Breast epithelium (tissue), 4 donors: ENCODE measurements at regions of chr11 and their contacts with region 1.

Region 1: DNA sequence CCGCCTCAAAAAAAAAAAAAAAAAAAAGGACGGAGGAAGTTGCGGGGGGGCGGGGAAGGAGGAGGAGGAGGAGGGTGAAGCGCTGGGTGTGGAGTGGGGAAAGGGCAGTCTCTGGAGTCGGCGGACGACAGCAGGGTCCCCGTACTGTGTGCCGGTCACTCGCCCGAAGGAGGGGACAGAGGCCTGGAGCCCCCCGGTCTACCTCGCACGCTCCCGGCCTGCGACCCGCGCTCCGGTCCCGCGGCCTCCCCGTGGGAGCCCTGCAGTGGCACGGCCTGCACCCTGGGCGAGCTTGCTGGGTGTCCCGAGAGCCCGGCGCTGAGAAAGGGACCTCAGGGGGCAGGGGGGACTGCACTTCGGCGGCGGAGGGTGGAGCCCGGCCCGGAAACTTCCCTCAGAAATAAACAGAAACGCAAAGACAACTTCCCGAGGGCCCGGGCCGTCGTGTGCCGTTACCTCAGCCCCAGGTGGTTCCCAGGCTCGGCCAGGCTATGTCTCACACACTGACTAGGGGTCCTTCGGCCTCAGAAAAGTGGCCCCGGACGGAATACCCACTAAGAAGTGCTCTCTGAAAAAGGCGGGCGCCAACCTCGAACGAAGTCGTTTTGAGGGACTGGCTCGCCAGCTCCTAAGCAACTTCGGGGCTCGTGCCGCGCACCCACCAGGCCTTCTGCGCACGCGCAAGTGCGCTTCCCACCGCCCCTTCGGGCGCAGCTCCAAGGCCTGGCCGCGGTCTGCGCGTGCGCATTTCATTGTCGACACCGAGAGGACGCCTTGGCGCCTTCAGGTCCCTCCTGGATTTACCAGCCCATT is at the start of gene MAJIN:
- DNase-seq: peak; percentile 47 to 69
- H3K4me3 ChIP-seq: peak within 1 kb of the TSS; percentile 17 to 58 (median 45)
- H3K27ac ChIP-seq: no peak within 1 kb of the TSS
- H3K4me1 ChIP-seq: no peaks in the 10 kb centered on the region
- H3K27me3 ChIP-seq: no peaks in the 10 kb centered on the region
- CTCF ChIP-seq: no peak
- POLR2A ChIP-seq: no peak
- total RNA-seq, gene MAJIN: not detected

Region 2: GRCh38 chr11:64419818-64420485 is 551.7 kb before region 1 on chr11:
- intact Hi-C with region 1: no loop called
- DNase-seq: no peak
- H3K4me3 ChIP-seq: no peak overlapping the region
- H3K27ac ChIP-seq: no peak overlapping the region
- H3K4me1 ChIP-seq: no peaks in the 10 kb centered on the region
- H3K27me3 ChIP-seq: no peaks in the 10 kb centered on the region
- CTCF ChIP-seq: no peak
- POLR2A ChIP-seq: no peak

Region 3: DNA sequence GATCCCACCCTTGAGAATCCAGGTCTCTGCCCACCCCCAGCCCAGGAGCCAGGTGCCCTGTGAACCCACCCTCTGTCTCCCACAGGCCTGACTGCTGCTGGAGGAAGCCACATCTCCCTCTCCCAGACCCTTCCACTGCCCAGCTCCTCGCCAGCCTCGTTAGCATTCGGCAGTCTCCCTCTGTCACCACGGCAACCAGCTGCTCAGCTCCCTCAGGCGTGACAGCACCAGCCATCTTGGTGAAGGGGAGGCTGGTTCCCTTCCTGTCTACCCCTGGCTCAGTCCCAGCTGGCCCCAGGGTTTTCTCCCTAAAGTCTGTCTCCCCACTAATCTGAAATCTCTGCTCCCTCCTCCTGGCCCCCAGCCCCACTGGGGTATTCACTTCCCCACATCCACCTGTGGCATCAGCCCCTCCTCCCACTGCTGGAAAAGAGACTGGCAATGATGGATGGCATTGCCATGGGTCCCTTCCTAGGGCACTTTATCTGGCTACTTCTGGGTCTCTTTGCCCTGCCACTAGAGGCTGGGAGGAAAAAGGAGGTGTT is 276.7 kb before region 1 on chr11:
- intact Hi-C with region 1: no loop called
- DNase-seq: no peak
- H3K4me3 ChIP-seq: no peak overlapping the region
- H3K27ac ChIP-seq: no peak overlapping the region
- H3K4me1 ChIP-seq: no peaks in the 10 kb centered on the region
- H3K27me3 ChIP-seq: peaks cover 0 to 12% of the 10 kb centered on the region in 2 donors
- CTCF ChIP-seq: no peak
- POLR2A ChIP-seq: no peak

Region 4: DNA sequence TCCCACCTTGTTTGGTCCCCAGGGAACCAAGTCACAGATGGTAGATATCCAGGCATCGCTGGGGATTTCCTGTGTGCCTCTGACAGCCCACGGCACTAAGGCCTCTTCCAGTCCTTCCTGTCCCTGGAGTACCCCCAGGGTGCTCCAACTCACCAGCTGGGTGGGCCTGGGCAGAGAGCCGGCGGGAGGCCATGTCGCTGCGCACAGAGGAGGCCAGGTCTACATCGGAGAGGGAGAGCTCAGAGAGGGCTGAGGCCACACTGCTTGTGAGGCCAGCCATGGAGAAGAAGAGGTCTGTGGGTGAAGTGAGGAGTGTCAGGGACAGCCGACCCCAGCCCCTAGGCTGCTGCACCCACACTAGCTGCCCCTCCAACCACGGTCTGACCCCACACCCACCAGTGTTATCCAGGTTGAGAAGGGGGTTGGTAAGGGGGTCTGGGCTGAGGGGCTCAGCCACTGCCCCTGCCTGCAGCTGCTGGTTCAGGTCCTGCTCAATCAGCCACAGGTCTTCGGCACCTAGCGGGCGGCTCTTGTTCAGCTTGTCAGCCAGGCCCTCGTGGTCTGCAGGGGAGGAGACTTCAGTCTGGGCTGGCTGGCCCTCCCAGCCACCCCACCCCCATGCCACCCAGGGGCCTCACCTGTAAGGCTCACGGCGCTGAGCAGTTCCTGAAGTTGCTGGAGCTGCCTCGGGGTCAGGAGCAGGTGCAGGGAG is 59.8 kb before region 1 on chr11:
- intact Hi-C with region 1: loop called (anchors 2 kb)
- DNase-seq: no peak
- H3K4me3 ChIP-seq: no peak overlapping the region
- H3K27ac ChIP-seq: no peak overlapping the region
- H3K4me1 ChIP-seq: peaks cover 0 to 3% of the 10 kb centered on the region in 2 donors
- H3K27me3 ChIP-seq: no peaks in the 10 kb centered on the region
- CTCF ChIP-seq: no peak
- POLR2A ChIP-seq: no peak

Region 5: DNA sequence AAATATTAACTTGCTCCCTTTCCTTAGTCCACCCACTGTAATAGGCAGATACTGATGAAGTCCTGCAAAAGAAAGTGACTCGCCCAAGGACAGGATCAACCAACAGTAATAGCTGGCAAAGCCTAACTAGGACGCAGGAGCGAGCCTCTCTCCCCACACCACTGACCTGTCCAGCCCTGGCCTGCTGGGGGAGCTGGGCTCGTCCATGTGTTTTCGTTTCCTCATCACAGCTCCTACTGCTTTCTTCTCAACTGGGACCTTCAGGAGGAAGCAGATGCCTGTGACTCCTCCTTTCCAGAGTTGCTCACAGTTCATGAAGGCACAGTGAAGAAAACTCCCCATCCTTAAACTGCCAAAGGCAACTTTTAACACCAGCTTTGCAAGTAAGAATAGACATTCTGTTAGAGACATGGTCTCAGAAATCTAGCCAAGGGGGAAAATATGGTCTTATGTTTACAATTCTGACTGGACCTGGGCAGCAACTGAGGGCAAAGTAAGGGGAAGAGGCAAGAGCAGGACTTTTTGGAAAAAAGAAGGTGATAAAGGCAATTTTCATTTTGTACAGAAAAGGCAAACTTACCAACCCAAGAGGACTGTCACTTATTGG is 24.3 kb before region 1 on chr11:
- intact Hi-C with region 1: no loop called
- DNase-seq: no peak
- H3K4me3 ChIP-seq: no peak overlapping the region
- H3K27ac ChIP-seq: no peak overlapping the region
- H3K4me1 ChIP-seq: no peaks in the 10 kb centered on the region
- H3K27me3 ChIP-seq: no peaks in the 10 kb centered on the region
- CTCF ChIP-seq: no peak
- POLR2A ChIP-seq: no peak

Region 6: DNA sequence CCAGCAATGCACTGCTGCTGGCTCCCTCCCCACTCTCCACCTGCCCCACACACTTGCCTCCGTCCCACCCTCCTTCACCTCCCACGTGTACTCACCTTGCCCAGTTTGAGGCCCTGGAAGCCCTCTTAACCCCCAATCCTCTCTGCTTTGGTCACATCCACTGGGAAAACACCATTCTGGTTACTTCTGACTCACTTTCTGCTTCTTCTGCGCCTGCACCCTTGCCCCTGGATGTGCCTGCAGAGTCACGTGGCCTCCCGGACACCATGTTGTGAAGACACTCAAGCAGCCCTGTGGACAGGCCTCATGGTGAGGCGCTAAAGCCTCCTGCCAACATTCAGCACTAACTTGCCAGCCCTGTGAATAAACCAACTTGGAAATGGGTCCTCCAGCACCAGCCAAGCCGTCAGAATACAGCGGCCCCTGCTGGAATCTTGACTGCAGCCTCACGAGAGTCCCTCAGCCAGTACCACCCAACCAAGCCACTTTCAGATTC is 89.3 kb after region 1 on chr11:
- intact Hi-C with region 1: no loop called
- DNase-seq: no peak
- H3K4me3 ChIP-seq: no peak overlapping the region
- H3K27ac ChIP-seq: no peak overlapping the region
- H3K4me1 ChIP-seq: no peaks in the 10 kb centered on the region
- H3K27me3 ChIP-seq: no peaks in the 10 kb centered on the region
- CTCF ChIP-seq: no peak
- POLR2A ChIP-seq: no peak

Region 7: GRCh38 chr11:66694732-66695207 is 1723.1 kb after region 1 on chr11:
- intact Hi-C with region 1: loop called (anchors 5 kb)
- DNase-seq: peak; percentile 90 to 93
- H3K4me3 ChIP-seq: no peak overlapping the region
- H3K27ac ChIP-seq: peak overlapping the region in 1 of 2 donors; percentile 43
- H3K4me1 ChIP-seq: no peaks in the 10 kb centered on the region
- H3K27me3 ChIP-seq: no peaks in the 10 kb centered on the region
- CTCF ChIP-seq: peak; percentile 85 to 99 (median 92)
- POLR2A ChIP-seq: no peak